ENCODE measurements at regions of chr5 and their contacts with region 1.

Region 1: GRCh38 chr5:159316519-159317383 is 13.5 kb downstream of the IL12B start:
- DNase-seq: peak; percentile 64
- H3K4me3 Mint-ChIP-seq: no peak overlapping the region
- H3K27ac Mint-ChIP-seq: no peak overlapping the region
- H3K4me1 Mint-ChIP-seq: no peaks in the 10 kb centered on the region
- H3K27me3 Mint-ChIP-seq: peaks cover 20% of the 10 kb centered on the region

Region 2: GRCh38 chr5:159156426-159157238 is 160.1 kb before region 1 on chr5:
- CTCF ChIA-PET with region 1: interaction called, 19 read pairs
- POLR2A ChIA-PET with region 1: no interaction called
- DNase-seq: peak; percentile 58
- H3K4me3 Mint-ChIP-seq: no peak overlapping the region
- H3K27ac Mint-ChIP-seq: peak overlapping the region; percentile 68
- H3K4me1 Mint-ChIP-seq: peaks cover 27% of the 10 kb centered on the region
- H3K27me3 Mint-ChIP-seq: no peaks in the 10 kb centered on the region

Region 3: DNA sequence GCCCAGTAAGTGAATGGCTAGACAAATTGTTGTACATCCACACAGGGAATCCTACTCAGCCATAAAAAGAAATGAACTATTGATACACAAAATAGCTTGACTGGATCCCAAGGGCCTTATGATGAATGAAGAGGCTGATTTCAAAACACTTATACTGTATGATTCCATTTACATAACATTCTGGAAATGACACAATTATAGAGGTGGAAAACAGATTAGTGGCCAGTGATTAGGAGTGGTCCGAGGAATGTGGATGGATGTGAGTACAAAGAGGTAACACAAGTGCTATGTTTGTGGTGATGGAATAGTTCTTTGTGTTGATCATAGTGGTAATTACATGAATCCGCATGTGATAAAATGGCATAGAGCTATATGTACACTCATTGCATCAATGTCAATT is 58.4 kb before region 1 on chr5:
- CTCF ChIA-PET with region 1: no interaction called
- POLR2A ChIA-PET with region 1: no interaction called
- DNase-seq: no peak
- H3K4me3 Mint-ChIP-seq: no peak overlapping the region
- H3K27ac Mint-ChIP-seq: no peak overlapping the region
- H3K4me1 Mint-ChIP-seq: peaks cover 18% of the 10 kb centered on the region
- H3K27me3 Mint-ChIP-seq: no peaks in the 10 kb centered on the region

Region 4: DNA sequence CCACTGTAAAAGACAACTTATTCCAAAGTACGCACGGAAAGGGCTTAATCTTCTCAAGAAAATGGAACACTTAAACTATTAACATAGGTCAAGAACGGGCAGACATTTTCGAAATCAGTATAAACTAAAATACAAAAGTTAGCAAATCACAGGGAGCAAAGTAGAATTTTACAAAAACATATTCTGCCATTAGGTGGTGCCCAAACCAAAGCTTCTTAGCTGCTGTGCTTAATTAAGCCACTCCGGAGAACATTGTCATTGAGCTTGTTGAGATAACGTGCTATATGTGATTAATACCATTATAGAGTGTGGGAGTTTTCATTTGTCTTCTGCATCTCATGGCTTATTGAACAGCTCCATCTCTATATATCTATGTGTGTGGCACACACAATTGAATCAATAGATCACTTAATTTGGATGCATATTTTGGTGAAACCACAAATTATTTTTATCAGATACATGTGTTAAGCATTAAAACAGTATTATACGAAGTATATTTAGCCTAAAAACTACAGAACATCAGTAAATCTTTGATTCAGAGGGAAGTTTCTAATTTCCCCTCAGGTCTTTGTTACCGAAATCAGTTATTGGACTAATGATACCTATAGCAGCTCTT is 30.2 kb before region 1 on chr5:
- CTCF ChIA-PET with region 1: no interaction called
- POLR2A ChIA-PET with region 1: no interaction called
- DNase-seq: peak; percentile 42
- H3K4me3 Mint-ChIP-seq: no peak overlapping the region
- H3K27ac Mint-ChIP-seq: no peak overlapping the region
- H3K4me1 Mint-ChIP-seq: no peaks in the 10 kb centered on the region
- H3K27me3 Mint-ChIP-seq: no peaks in the 10 kb centered on the region

Region 5: GRCh38 chr5:159341914-159342313 is 25.2 kb after region 1 on chr5:
- CTCF ChIA-PET with region 1: no interaction called
- POLR2A ChIA-PET with region 1: no interaction called
- DNase-seq: peak; percentile 62
- H3K4me3 Mint-ChIP-seq: no peak overlapping the region
- H3K27ac Mint-ChIP-seq: peak overlapping the region; percentile 82
- H3K4me1 Mint-ChIP-seq: peaks cover 67% of the 10 kb centered on the region
- H3K27me3 Mint-ChIP-seq: peaks cover 11% of the 10 kb centered on the region

Measured in activated CD4-positive, alpha-beta T cell treated with anti-CD3 and anti-CD28 coated beads, Interleukin-2, amount 10 ng/mL, durations not matched to agents 7 days and 5 days (primary cell).